ENCODE measurements at regions of chr1 and their contacts with region 1.

Region 1: DNA sequence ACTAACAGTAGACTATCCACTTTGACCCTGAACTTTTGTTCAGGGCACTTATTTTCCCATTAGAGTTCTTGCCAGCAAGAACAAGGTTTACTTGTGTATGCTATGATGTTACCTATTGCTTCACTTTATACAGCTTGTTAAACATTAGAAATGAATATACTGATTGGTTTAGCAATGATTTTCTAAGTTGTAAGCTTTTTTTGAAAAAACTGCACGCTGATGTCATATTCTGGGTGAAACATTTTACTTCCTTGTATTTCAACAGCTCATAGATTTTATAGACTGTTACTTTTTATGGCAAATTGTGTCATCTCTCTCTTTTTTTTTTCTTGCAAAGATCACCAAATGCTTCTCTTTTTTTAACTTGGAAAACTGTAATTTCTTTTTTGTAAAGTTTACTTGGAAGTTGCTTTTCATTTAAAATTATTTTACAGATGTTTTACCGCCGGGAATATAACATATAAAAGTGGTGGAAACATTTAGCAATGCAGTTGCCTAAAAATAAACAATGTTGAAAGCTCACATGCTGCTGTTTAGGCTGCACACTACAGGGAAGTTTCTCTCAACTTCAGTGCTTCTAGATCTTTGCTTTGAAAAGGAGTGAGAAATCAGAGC is 215.3 kb upstream of the NFIA start:
- DNase-seq: no peak
- ATAC-seq: peak in 3 of 4 donors; percentile 43 to 48 (median 43)
- H3K4me3 ChIP-seq: peak overlapping the region; percentile 58
- H3K27ac ChIP-seq: peak overlapping the region; percentile 70
- H3K4me1 ChIP-seq: peaks cover 9% of the 10 kb centered on the region
- H3K27me3 ChIP-seq: peaks cover 0 to 3% (median 0%) of the 10 kb centered on the region in 3 donors
- CTCF ChIP-seq: no peak

Region 2: DNA sequence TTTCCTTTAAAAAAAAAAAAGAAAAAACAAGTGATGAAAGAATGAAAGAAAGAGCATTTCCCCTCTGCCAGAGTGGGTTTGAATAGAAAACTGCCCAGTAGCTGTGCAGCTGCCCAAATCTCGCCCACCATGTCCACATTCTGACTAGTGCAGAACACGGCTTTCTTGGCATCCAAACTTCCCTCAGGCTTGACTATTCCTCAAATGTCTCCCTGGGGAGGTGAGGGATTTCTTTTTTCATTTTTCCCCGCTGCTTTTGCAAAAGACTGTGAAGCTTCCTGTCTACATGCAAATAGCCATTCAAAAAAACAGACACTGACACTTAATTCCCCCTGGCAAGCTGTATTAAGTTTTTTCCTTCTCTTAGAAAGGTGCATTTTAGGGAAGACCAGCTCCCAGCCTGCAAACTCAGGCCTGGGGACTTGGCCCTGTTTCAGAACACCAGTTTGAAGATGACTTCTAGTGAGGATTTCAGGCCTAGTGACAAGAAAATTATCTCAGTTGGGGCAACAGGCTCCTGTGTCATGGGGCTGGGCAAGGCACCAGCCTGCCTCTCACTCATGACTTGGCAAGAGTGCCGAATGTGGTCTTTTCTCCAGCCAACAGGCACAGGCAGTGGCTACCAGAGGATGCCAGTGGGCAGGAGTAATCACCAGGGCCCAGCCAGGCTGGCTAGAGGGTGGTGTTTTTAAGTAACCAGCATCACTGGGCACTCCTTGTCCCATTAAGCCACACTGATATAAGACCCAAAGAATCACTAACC is 37.2 kb after region 1 on chr1:
- intact Hi-C with region 1: loop called in 1 of 2 experiments (anchors 5 kb)
- DNase-seq: peak; percentile 74 to 88
- ATAC-seq: peak; percentile 92 to 95 (median 94)
- H3K4me3 ChIP-seq: peak overlapping the region; percentile 7
- H3K27ac ChIP-seq: peak overlapping the region; percentile 93
- H3K4me1 ChIP-seq: peaks cover 46% of the 10 kb centered on the region
- H3K27me3 ChIP-seq: no peaks in the 10 kb centered on the region
- CTCF ChIP-seq: no peak

Region 3: GRCh38 chr1:60942896-60943638 is 76.0 kb after region 1 on chr1:
- intact Hi-C with region 1: loop called in 1 of 2 experiments (anchors 10 kb)
- DNase-seq: no peak
- ATAC-seq: peak; percentile 77 to 96 (median 90)
- H3K4me3 ChIP-seq: no peak overlapping the region
- H3K27ac ChIP-seq: peak overlapping the region; percentile 54
- H3K4me1 ChIP-seq: peaks cover 4% of the 10 kb centered on the region
- H3K27me3 ChIP-seq: no peaks in the 10 kb centered on the region
- CTCF ChIP-seq: no peak